ENCODE measurements at regions of chr15 and their contacts with region 1.

Region 1: DNA sequence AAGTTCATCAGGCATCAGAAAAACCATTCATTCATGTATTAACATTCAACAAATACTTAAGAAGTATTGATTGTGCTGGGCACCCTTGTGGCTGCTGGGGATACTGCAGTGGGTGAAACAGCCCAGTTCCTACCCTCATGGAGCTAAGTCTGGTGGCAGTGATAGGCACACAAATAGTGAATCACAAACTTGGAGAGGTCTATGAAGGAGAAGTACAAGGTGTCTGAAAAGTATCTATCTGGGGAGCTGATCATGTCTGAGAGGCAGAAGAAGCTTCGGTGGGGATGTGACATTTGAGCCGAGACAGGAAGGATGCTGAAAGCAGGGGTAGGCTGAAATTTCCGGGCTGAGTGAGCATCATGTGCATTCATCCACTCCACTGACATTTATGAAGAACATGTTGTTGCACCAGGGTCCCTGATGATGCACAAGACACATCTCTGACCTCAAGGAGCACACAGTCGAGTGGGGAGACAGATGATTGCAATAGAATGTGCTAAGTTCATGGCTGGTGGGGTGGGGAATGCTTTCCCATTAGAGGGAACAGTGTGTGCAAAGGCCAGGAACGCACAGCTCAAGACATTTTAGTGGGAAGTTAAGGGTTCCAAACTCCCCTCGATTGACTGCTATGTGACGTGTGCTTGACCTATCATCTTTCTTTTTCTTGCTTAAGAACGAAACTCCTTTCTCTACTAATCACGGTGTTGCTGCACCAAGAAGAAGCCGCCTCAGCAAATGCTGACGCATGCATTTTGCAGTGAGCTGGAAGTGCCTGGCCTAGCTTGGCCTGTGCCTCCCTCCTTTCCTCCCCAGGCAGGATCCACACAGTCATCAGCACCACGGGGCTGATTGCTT is 309.1 kb upstream of the ICE2 start:
- DNase-seq: peak; percentile 43 to 64 (median 51)
- H3K4me3 ChIP-seq: peak overlapping the region in 1 of 2 donors; percentile 17
- H3K4me3 Mint-ChIP-seq: peak overlapping the region; percentile 56 to 78 (median 64)
- H3K27ac ChIP-seq: peak overlapping the region; percentile 53
- H3K27ac Mint-ChIP-seq: peak overlapping the region; percentile 72 to 97 (median 95)
- H3K4me1 ChIP-seq: peaks cover 42% of the 10 kb centered on the region
- H3K4me1 Mint-ChIP-seq: peaks cover 30 to 50% (median 38%) of the 10 kb centered on the region in 4 donors
- H3K27me3 ChIP-seq: no peaks in the 10 kb centered on the region
- H3K27me3 Mint-ChIP-seq: no peaks in the 10 kb centered on the region

Region 2: GRCh38 chr15:60592371-60593169 is 195.5 kb before region 1 on chr15:
- CTCF ChIA-PET with region 1: interaction called, 10 read pairs
- POLR2A ChIA-PET with region 1: interaction called, 18 read pairs
- intact Hi-C with region 1: no loop called
- DNase-seq: peak; percentile 88 to 91 (median 90)
- H3K4me3 ChIP-seq: peak overlapping the region; percentile 39 to 75
- H3K4me3 Mint-ChIP-seq: peak overlapping the region; percentile 80 to 90 (median 87)
- H3K27ac ChIP-seq: peak overlapping the region; percentile 92
- H3K27ac Mint-ChIP-seq: peak overlapping the region; percentile 82 to 94 (median 92)
- H3K4me1 ChIP-seq: peaks cover 36% of the 10 kb centered on the region
- H3K4me1 Mint-ChIP-seq: peaks cover 28 to 55% (median 37%) of the 10 kb centered on the region in 4 donors
- H3K27me3 ChIP-seq: no peaks in the 10 kb centered on the region
- H3K27me3 Mint-ChIP-seq: no peaks in the 10 kb centered on the region

Region 3: GRCh38 chr15:60708684-60709083 is 79.4 kb before region 1 on chr15:
- CTCF ChIA-PET with region 1: interaction called, 5 read pairs
- POLR2A ChIA-PET with region 1: interaction called, 11 read pairs
- intact Hi-C with region 1: no loop called
- DNase-seq: no peak
- H3K4me3 ChIP-seq: no peak overlapping the region
- H3K4me3 Mint-ChIP-seq: peak overlapping the region in 4 of 8 donors; percentile 0 to 48 (median 6)
- H3K27ac ChIP-seq: no peak overlapping the region
- H3K27ac Mint-ChIP-seq: peak overlapping the region in 3 of 7 donors; percentile 19 to 62 (median 41)
- H3K4me1 ChIP-seq: peaks cover 38% of the 10 kb centered on the region
- H3K4me1 Mint-ChIP-seq: peaks cover 35 to 53% (median 41%) of the 10 kb centered on the region in 4 donors
- H3K27me3 ChIP-seq: no peaks in the 10 kb centered on the region
- H3K27me3 Mint-ChIP-seq: no peaks in the 10 kb centered on the region

Region 4: DNA sequence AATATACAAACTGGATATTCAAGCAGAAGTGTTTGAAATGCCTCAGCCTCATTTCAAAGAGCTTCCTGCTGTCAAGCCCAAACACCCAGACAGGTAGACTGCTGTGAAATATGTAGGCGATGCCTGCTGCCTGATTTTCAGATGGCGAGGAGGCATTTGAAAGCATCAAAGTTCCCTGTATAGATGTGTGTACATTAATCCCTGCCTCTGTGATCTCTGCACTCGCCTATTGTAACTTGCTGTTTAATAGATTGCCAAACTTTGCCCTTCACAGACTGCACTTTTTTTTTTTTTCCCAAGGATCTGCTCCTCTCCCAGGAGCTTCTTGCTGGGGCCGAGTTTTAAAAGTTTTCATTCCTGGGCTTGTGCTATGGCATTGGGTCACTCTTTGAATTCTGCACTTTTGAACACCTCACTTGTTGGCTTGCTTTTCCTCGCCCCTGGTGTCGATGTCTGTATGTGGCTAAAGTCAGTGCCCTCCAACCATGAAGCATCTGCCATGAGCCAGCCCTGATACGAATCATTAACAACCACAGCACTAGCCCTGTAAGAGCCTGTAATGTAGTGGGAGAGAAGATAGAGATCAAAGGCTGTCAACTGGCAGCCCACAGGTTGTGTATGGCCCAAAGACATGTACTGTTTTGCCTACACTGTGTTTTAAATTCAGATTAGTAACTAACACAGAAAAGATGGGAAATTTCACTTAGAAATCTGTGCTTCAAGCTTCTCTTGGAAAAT is 21.5 kb before region 1 on chr15:
- CTCF ChIA-PET with region 1: interaction called, 15 read pairs
- POLR2A ChIA-PET with region 1: interaction called, 7 read pairs
- intact Hi-C with region 1: no loop called
- DNase-seq: no peak
- H3K4me3 ChIP-seq: no peak overlapping the region
- H3K4me3 Mint-ChIP-seq: peak overlapping the region in 1 of 8 donors; percentile 10
- H3K27ac ChIP-seq: no peak overlapping the region
- H3K27ac Mint-ChIP-seq: peak overlapping the region in 5 of 7 donors; percentile 3 to 25 (median 12)
- H3K4me1 ChIP-seq: peaks cover 14% of the 10 kb centered on the region
- H3K4me1 Mint-ChIP-seq: peaks cover 24 to 50% (median 29%) of the 10 kb centered on the region in 4 donors
- H3K27me3 ChIP-seq: no peaks in the 10 kb centered on the region
- H3K27me3 Mint-ChIP-seq: no peaks in the 10 kb centered on the region

Region 5: GRCh38 chr15:60804986-60805949 is 17.2 kb after region 1 on chr15:
- CTCF ChIA-PET with region 1: interaction called, 45 read pairs
- POLR2A ChIA-PET with region 1: interaction called, 24 read pairs
- intact Hi-C with region 1: loop called (anchors 2 kb)
- DNase-seq: no peak
- H3K4me3 ChIP-seq: no peak overlapping the region
- H3K4me3 Mint-ChIP-seq: peak overlapping the region in 7 of 8 donors; percentile 26 to 77 (median 69)
- H3K27ac ChIP-seq: peak overlapping the region; percentile 29
- H3K27ac Mint-ChIP-seq: peak overlapping the region; percentile 71 to 94 (median 91)
- H3K4me1 ChIP-seq: peaks cover 95% of the 10 kb centered on the region
- H3K4me1 Mint-ChIP-seq: peaks cover 68 to 96% (median 84%) of the 10 kb centered on the region in 4 donors
- H3K27me3 ChIP-seq: no peaks in the 10 kb centered on the region
- H3K27me3 Mint-ChIP-seq: no peaks in the 10 kb centered on the region

Region 6: GRCh38 chr15:60859996-60860494 is 72.0 kb after region 1 on chr15:
- CTCF ChIA-PET with region 1: interaction called, 20 read pairs
- POLR2A ChIA-PET with region 1: interaction called, 6 read pairs
- intact Hi-C with region 1: loop called (anchors 1 kb)
- DNase-seq: no peak
- H3K4me3 ChIP-seq: no peak overlapping the region
- H3K4me3 Mint-ChIP-seq: no peak overlapping the region
- H3K27ac ChIP-seq: no peak overlapping the region
- H3K27ac Mint-ChIP-seq: peak overlapping the region in 1 of 7 donors; percentile 1
- H3K4me1 ChIP-seq: peaks cover 6% of the 10 kb centered on the region
- H3K4me1 Mint-ChIP-seq: peaks cover 22 to 44% (median 33%) of the 10 kb centered on the region in 4 donors
- H3K27me3 ChIP-seq: no peaks in the 10 kb centered on the region
- H3K27me3 Mint-ChIP-seq: no peaks in the 10 kb centered on the region

Region 7: GRCh38 chr15:60916679-60917460 is 128.8 kb after region 1 on chr15:
- CTCF ChIA-PET with region 1: interaction called, 13 read pairs
- POLR2A ChIA-PET with region 1: interaction called, 6 read pairs
- intact Hi-C with region 1: no loop called
- DNase-seq: peak; percentile 85 to 95 (median 88)
- H3K4me3 ChIP-seq: no peak overlapping the region
- H3K4me3 Mint-ChIP-seq: peak overlapping the region in 5 of 8 donors; percentile 18 to 72 (median 57)
- H3K27ac ChIP-seq: peak overlapping the region; percentile 55
- H3K27ac Mint-ChIP-seq: peak overlapping the region; percentile 82 to 98 (median 94)
- H3K4me1 ChIP-seq: peaks cover 12% of the 10 kb centered on the region
- H3K4me1 Mint-ChIP-seq: peaks cover 7 to 17% (median 10%) of the 10 kb centered on the region in 4 donors
- H3K27me3 ChIP-seq: no peaks in the 10 kb centered on the region
- H3K27me3 Mint-ChIP-seq: no peaks in the 10 kb centered on the region